Heart right ventricle (tissue), 16 donors: ENCODE measurements at regions of chr12 and their contacts with region 1.

Region 1: GRCh38 chr12:118307069-118307954 is 65.4 kb downstream of the TAOK3 start:
- DNase-seq: peak in 1 of 2 donors; percentile 53
- ATAC-seq: peak in 7 of 8 donors; percentile 46 to 80 (median 72)
- H3K4me3 ChIP-seq: peak overlapping the region in 6 of 10 donors; percentile 15 to 31 (median 22)
- H3K27ac ChIP-seq: peak overlapping the region in 4 of 10 donors; percentile 10 to 73 (median 29)
- H3K4me1 ChIP-seq: peaks cover 0 to 41% (median 15%) of the 10 kb centered on the region in 9 donors
- H3K27me3 ChIP-seq: no peaks in the 10 kb centered on the region
- CTCF ChIP-seq: no peak

Region 2: GRCh38 chr12:118237052-118237665 is 70.2 kb before region 1 on chr12:
- intact Hi-C with region 1: no loop called
- DNase-seq: no peak
- ATAC-seq: no peak
- H3K4me3 ChIP-seq: no peak overlapping the region
- H3K27ac ChIP-seq: peak overlapping the region in 1 of 10 donors; percentile 71
- H3K4me1 ChIP-seq: peaks cover 0 to 19% (median 0%) of the 10 kb centered on the region in 9 donors
- H3K27me3 ChIP-seq: no peaks in the 10 kb centered on the region
- CTCF ChIP-seq: no peak

Region 3: DNA sequence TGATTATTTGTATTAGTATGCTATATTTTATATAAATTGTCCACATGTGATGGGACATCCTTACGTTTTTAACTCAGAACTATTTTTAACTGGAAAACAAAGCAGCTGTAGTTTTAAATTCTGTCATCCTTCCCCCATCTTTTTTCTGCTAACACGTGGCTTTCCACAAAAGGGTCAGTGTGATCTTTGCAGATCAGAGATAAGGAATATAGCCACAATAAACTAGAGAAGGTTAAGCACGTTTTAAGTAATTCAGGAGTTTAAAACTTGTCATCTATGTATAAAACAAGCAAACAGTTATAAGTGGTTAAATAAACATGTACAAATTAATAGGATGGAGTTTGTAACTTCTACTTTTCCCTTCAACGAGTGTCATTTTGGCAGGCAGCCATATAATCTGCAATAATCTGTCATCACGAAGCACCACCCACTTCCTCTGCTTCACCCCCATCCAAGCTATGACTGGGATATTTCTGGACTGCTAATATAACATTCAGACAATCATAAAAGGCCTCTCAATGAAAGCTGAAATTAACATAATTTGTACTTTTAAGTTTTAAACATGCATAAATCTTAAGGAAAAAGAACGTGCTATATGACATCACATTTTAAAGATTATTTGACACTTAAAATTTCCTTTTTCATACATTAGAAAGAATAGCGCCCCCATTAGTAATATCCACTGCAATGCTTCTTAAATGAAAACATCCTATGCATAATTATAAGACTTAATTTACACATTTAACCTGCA is 50.1 kb after region 1 on chr12:
- intact Hi-C with region 1: loop called in 1 of 10 experiments (anchors 10 kb)
- DNase-seq: peak in 1 of 2 donors; percentile 74
- ATAC-seq: peak in 7 of 8 donors; percentile 80 to 89 (median 87)
- H3K4me3 ChIP-seq: peak overlapping the region in 1 of 10 donors; percentile 46
- H3K27ac ChIP-seq: peak overlapping the region in 7 of 10 donors; percentile 9 to 85 (median 45)
- H3K4me1 ChIP-seq: peaks cover 5 to 77% (median 21%) of the 10 kb centered on the region in 9 donors
- H3K27me3 ChIP-seq: no peaks in the 10 kb centered on the region
- CTCF ChIP-seq: peak in 1 of 9 donors; percentile 14